ENCODE measurements at regions of chr4 and their contacts with region 1.

Region 1: DNA sequence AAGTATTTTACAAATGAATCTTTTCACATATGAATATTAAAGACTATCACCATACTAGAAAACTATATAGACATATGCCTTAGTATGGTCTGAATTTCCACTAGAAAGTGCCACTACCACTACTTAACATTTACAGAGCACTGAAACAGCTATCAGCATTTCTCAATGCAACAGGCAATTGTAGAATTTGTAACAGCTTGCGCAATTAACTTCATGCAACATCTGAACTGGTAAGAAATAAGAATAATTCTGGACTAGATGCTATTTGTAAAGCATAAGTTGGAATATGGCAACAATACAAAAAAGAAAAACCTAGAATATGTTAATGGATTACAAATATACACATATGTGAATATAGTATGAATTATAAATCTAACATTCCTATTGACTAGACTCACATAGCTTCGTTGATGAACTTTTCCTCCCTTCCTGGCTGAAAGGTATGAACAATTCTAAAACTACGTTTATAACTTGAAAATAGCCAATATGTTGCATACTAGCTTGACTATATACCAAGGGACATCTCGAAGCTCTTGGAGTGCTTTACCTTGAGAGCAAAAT is 82.0 kb downstream of the ATP8A1 start:
- DNase-seq: no peak
- H3K4me3 ChIP-seq: no peak overlapping the region
- H3K27ac ChIP-seq: no peak overlapping the region
- H3K4me1 ChIP-seq: peaks cover 0 to 6% of the 10 kb centered on the region in 2 donors
- H3K27me3 ChIP-seq: no peaks in the 10 kb centered on the region
- CTCF ChIP-seq: no peak
- POLR2A ChIP-seq: no peak

Region 2: DNA sequence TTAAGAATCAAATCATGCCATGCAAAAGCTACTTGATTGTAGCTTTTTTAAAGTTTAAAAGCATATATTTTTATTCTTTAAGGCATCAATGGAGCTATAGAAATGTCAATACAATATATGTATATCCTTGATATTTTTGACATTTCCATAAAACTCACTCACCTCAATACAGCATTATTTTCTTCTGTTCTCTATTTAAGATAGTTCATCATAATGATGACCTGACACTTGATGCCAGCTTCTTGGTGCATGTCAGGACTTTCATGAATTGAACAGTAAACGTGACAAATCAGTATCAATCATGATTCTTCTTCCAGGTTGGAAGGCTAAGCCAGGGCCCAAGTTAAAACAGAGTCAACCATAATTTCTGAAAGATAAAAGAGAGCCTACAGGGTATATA is 115.6 kb after region 1 on chr4:
- intact Hi-C with region 1: no loop called
- DNase-seq: no peak
- H3K4me3 ChIP-seq: no peak overlapping the region
- H3K27ac ChIP-seq: no peak overlapping the region
- H3K4me1 ChIP-seq: no peaks in the 10 kb centered on the region
- H3K27me3 ChIP-seq: no peaks in the 10 kb centered on the region
- CTCF ChIP-seq: no peak
- POLR2A ChIP-seq: no peak

Region 3: DNA sequence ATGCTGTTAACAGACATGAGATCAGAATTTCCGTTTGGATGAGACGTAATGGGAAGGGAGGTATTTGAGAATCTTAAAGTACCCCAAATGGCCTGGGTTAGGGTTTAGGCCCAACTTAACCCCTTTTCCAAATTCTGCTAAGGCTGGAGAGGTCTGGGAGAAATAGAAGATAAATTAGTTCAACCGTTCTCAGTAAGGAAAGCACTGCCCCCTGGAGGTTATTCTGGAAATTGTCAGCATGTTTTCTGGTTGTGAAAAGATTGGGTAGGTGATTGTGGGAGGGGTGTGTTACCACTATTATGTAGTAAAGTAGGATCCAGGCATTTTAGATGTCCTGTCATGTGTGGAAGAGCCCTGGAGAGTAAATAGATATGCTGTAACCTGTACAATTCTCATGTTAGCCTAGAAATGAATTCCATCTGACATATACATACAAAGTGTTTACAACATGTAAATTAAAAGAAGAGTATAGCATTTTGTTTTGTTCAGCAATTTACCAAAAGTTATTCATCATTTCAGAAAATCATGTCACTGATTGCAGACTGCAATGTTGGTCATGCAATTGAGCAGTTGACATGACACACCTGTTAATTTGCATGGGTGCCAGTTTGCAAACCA is 290.7 kb after region 1 on chr4:
- intact Hi-C with region 1: loop called (anchors 2 kb)
- DNase-seq: no peak
- H3K4me3 ChIP-seq: no peak overlapping the region
- H3K27ac ChIP-seq: no peak overlapping the region
- H3K4me1 ChIP-seq: no peaks in the 10 kb centered on the region
- H3K27me3 ChIP-seq: peaks cover 0 to 5% of the 10 kb centered on the region in 2 donors
- CTCF ChIP-seq: peak; percentile 35 to 68 (median 61)
- POLR2A ChIP-seq: no peak

Measured in breast epithelium (tissue), 4 donors.